Activated CD4-positive, alpha-beta memory T cell treated with anti-CD3 and anti-CD28 coated beads, Interleukin-2, amount 10 ng/mL, durations not matched to agents 7 days and 5 days (primary cell): ENCODE measurements at regions of chr18 and their contacts with region 1.

Region 1: GRCh38 chr18:46343931-46344372 is 239.8 kb downstream of the HAUS1 start:
- DNase-seq: peak; percentile 74
- H3K4me3 Mint-ChIP-seq: no peak overlapping the region
- H3K27ac Mint-ChIP-seq: peak overlapping the region; percentile 75
- H3K4me1 Mint-ChIP-seq: peaks cover 65% of the 10 kb centered on the region
- H3K27me3 Mint-ChIP-seq: peaks cover 3% of the 10 kb centered on the region

Region 2: GRCh38 chr18:46333431-46334135 is 10.4 kb before region 1 on chr18:
- CTCF ChIA-PET with region 1: interaction called, 9 read pairs
- POLR2A ChIA-PET with region 1: interaction called, 13 read pairs
- DNase-seq: peak; percentile 32
- H3K4me3 Mint-ChIP-seq: peak overlapping the region; percentile 68
- H3K27ac Mint-ChIP-seq: no peak overlapping the region
- H3K4me1 Mint-ChIP-seq: peaks cover 48% of the 10 kb centered on the region
- H3K27me3 Mint-ChIP-seq: peaks cover 78% of the 10 kb centered on the region